ENCODE measurements at regions of chr18 and their contacts with region 1.

Region 1: DNA sequence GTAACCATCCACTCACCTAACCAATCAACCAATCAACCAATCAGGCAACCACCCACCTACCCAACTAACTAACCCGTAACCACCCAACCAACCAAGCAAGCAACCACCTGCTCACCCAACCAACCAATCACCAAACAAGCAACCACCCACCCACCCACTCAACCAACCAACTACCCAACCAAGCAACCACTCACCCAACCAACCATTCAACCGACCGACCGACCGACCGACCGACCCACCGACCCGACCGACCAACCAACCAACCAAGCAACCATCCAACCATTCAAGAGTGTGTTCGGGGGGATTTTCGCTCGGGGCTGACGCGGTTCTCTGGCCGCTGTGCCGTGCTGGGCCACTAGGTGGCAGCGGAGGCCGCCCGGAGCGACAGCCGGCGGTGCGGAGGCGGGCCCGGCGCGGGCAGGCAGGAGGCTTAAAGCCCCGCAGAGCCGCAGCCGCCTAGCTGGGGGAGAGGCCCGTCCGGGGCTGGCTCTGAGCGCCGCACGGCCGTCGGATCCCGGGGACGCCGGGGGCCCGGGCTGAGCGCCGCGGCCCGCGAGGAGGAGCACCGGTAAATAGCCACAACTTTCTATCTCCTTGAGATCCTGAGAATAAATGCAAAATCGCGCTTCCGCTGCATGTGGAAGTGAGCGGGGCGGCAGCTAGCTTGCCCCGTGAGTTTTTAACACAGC is at the start of gene MC5R:
- DNase-seq: peak; percentile 12
- H3K4me3 ChIP-seq: peak within 1 kb of the TSS; percentile 27 to 38 (median 37)
- H3K27ac ChIP-seq: no peak within 1 kb of the TSS
- H3K4me1 ChIP-seq: no peaks in the 10 kb centered on the region
- H3K27me3 ChIP-seq: peaks cover 3% of the 10 kb centered on the region
- CTCF ChIP-seq: peak; percentile 83 to 89
- total RNA-seq, gene MC5R: not detected

Region 2: DNA sequence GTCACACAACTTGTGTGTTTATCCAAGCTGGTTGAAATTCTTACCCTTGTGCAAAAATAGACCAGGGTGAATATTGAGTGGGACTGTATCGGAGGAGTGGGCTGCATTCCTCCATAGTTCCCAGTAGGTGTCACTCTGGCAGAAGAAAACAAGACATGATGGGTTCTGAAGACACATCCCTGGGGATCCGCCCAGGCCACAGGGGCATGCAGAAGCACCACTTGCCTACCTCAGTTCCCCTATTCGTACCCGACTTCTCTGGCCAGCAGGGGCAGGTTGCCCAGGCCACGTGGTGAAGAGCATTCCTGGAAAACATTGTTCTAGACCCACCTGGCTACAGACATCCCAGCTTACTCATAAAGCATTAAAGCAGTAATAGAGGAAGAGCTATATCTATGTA is 265.7 kb before region 1 on chr18:
- CTCF ChIA-PET with region 1: no interaction called
- dilution Hi-C with region 1: no loop called
- in situ Hi-C with region 1: loop called in 1 of 2 experiments (anchors 25 kb)
- intact Hi-C with region 1: no loop called
- DNase-seq: peak; percentile 29
- H3K4me3 ChIP-seq: no peak overlapping the region
- H3K27ac ChIP-seq: no peak overlapping the region
- H3K4me1 ChIP-seq: no peaks in the 10 kb centered on the region
- H3K27me3 ChIP-seq: no peaks in the 10 kb centered on the region
- CTCF ChIP-seq: peak; percentile 67 to 70

Region 3: DNA sequence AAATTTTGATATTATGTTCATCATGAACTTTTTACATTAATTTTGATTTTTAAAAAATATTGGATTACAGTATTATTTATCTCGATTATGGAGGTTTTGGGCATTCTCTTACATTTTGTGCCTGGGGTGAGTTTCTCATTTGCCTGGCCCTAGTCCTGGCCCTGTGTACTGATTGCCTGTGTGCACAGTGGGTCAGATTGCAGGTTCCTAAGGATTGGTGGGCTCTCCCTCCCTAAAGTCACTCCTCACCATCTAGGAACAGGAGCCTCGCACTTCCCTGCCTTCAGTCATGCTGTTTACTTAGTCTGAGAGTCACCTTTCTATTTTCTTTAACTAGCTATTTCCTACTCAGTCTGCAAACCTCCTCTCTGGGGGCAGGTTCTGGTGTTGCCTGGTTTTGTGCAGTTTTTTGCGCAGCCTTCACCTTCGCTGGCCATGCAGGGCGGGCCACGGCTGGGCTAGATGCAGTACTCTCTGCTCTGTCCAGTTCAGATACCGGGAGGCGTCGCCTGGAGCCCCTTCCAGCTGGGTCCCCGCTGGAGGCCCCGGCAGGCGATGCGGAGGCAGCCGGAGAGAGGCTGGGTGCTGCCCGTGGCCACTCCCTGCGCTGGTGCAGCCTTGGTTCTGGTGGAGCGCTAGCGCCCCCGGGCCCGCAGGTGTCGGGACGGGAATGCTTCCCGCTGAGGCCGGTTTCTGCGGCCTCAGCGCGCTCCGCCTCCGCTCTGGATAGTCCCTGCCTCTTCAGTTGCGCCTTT is 23.2 kb before region 1 on chr18:
- CTCF ChIA-PET with region 1: no interaction called
- dilution Hi-C with region 1: no loop called
- in situ Hi-C with region 1: no loop called
- intact Hi-C with region 1: no loop called
- DNase-seq: peak; percentile 81
- H3K4me3 ChIP-seq: peak overlapping the region; percentile 34 to 42 (median 38)
- H3K27ac ChIP-seq: no peak overlapping the region
- H3K4me1 ChIP-seq: peaks cover 18% of the 10 kb centered on the region
- H3K27me3 ChIP-seq: no peaks in the 10 kb centered on the region
- CTCF ChIP-seq: peak; percentile 39 to 79

Region 4: DNA sequence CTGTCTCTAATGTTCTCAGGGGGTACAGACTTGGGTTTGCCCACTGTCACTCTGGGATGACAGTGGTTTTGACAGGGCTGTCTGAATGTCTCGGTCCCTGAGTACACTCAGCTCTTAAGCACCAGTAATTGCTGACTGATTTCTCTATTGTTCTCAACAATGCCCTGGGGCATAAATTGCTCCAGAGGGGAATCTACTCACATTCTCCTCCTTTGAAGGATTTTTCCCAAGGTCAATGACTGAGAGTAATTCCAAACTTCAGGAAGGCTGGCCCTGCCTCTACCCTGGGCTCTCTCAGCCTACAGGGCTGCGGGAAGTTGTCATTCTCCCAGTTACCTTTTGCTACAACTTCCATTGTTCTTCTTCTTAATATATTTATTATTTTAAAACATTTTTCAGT is 55.0 kb after region 1 on chr18:
- CTCF ChIA-PET with region 1: interaction called, 14 read pairs
- dilution Hi-C with region 1: no loop called
- in situ Hi-C with region 1: no loop called
- intact Hi-C with region 1: no loop called
- DNase-seq: no peak
- H3K4me3 ChIP-seq: no peak overlapping the region
- H3K27ac ChIP-seq: no peak overlapping the region
- H3K4me1 ChIP-seq: no peaks in the 10 kb centered on the region
- H3K27me3 ChIP-seq: no peaks in the 10 kb centered on the region
- CTCF ChIP-seq: no peak